A673 (cell line): ENCODE measurements at regions of chrX and their contacts with region 1.

Region 1: DNA sequence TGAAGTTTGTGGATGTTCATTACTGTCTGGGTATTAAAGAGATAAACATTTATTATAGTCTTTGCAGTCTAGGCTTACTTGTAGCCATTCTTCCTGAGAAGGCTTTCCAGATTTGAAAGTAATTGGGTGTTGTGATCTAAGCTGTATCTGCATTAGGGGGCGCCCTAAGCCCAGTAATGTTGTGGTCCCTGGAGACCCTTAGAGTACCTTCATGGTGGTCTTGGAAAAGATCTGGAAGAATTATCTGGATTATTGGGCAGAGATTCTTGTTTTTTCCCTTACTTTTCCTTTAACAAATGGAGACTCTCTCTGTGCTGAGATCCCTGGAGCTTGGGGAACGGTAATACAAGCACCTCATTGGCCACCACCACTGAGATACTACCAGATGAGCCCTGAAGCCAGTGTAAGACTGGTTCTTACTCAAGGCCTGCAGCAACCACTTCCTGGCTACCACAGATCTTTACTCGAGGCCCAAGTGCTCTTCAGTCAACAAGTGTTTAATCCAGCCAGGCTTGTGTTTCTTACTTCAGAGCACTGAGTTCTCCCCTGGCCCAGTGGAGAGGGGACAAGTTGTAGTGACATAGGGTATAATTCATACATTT is 63.1 kb downstream of the RTL3 start:
- DNase-seq: peak; percentile 54
- H3K4me3 ChIP-seq: no peak overlapping the region
- H3K27ac ChIP-seq: no peak overlapping the region
- H3K4me1 ChIP-seq: no peaks in the 10 kb centered on the region
- H3K27me3 ChIP-seq: no peaks in the 10 kb centered on the region
- CTCF ChIP-seq: peak; percentile 54

Region 2: DNA sequence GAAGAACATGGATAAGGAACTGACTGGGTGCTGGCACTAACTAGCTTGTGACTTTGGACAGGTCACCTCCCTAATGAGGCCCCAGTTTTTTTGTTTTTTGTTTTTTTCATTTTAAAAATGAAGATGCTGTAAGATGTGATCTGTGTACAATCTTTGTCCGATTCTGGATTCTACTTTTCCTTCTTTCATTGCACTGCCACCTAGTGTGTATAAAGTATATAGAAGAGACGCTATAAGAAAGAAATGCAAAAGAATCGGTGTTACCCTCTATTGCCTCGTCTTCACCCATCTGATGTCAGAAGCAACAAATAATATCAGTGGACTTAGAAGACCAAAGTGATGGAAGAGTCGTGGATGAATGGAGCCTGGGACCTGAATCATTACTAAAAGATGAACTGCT is 290.5 kb after region 1 on chrX:
- CTCF ChIA-PET with region 1: no interaction called
- POLR2A ChIA-PET with region 1: no interaction called
- intact Hi-C with region 1: loop called (anchors 1 kb)
- DNase-seq: peak; percentile 68
- H3K4me3 ChIP-seq: no peak overlapping the region
- H3K27ac ChIP-seq: no peak overlapping the region
- H3K4me1 ChIP-seq: no peaks in the 10 kb centered on the region
- H3K27me3 ChIP-seq: no peaks in the 10 kb centered on the region
- CTCF ChIP-seq: peak; percentile 62